Transverse colon (tissue), 4 donors: ENCODE measurements at regions of chr19 and their contacts with region 1.

Region 1: GRCh38 chr19:10380313-10381102 is at the start of gene TYK2:
- DNase-seq: peak; percentile 98
- H3K4me3 ChIP-seq: peak within 1 kb of the TSS; percentile 57 to 88 (median 86)
- H3K27ac ChIP-seq: peak within 1 kb of the TSS; percentile 84 to 91 (median 88)
- H3K4me1 ChIP-seq: peaks cover 9 to 21% (median 14%) of the 10 kb centered on the region in 4 donors
- H3K27me3 ChIP-seq: no peaks in the 10 kb centered on the region
- CTCF ChIP-seq: no peak
- EP300 ChIP-seq: no peak
- POLR2A ChIP-seq: peak; percentile 81
- total RNA-seq, gene TYK2: 111 to 463 (median 201) TPM

Region 2: GRCh38 chr19:9934132-9934950 is 446.2 kb before region 1 on chr19:
- in situ Hi-C with region 1: loop called in 3 of 4 experiments (anchors 25 kb)
- intact Hi-C with region 1: no loop called
- DNase-seq: peak; percentile 74
- H3K4me3 ChIP-seq: no peak overlapping the region
- H3K27ac ChIP-seq: no peak overlapping the region
- H3K4me1 ChIP-seq: peaks cover 3 to 24% (median 10%) of the 10 kb centered on the region in 4 donors
- H3K27me3 ChIP-seq: peaks cover 57% of the 10 kb centered on the region
- CTCF ChIP-seq: peak; percentile 75 to 86 (median 82)
- EP300 ChIP-seq: no peak
- POLR2A ChIP-seq: no peak

Region 3: GRCh38 chr19:10269333-10270179 is 111.0 kb before region 1 on chr19:
- in situ Hi-C with region 1: loop called in 3 of 4 experiments (anchors 5 kb)
- intact Hi-C with region 1: no loop called
- DNase-seq: peak; percentile 90
- H3K4me3 ChIP-seq: peak overlapping the region; percentile 25 to 45 (median 42)
- H3K27ac ChIP-seq: peak overlapping the region; percentile 74 to 86 (median 80)
- H3K4me1 ChIP-seq: peaks cover 6 to 23% (median 17%) of the 10 kb centered on the region in 4 donors
- H3K27me3 ChIP-seq: peaks cover 24% of the 10 kb centered on the region
- CTCF ChIP-seq: peak; percentile 92 to 97 (median 94)
- EP300 ChIP-seq: no peak
- POLR2A ChIP-seq: no peak

Region 4: GRCh38 chr19:10332955-10333757 is 47.4 kb before region 1 on chr19 and contains the start of gene RAVER1:
- in situ Hi-C with region 1: no loop called
- intact Hi-C with region 1: no loop called
- DNase-seq: peak; percentile 99
- H3K4me3 ChIP-seq: peak within 1 kb of the TSS; percentile 66 to 89 (median 74)
- H3K27ac ChIP-seq: peak within 1 kb of the TSS; percentile 90 to 95 (median 91)
- H3K4me1 ChIP-seq: peaks cover 0 to 31% (median 18%) of the 10 kb centered on the region in 4 donors
- H3K27me3 ChIP-seq: no peaks in the 10 kb centered on the region
- CTCF ChIP-seq: no peak
- EP300 ChIP-seq: no peak
- POLR2A ChIP-seq: peak; percentile 74
- total RNA-seq, gene RAVER1: 35.0 to 39.6 (median 38.6) TPM